Activated CD4-positive, alpha-beta memory T cell treated with anti-CD3 and anti-CD28 coated beads for 36 hours (primary cell): ENCODE measurements at regions of chr7 and their contacts with region 1.

Region 1: DNA sequence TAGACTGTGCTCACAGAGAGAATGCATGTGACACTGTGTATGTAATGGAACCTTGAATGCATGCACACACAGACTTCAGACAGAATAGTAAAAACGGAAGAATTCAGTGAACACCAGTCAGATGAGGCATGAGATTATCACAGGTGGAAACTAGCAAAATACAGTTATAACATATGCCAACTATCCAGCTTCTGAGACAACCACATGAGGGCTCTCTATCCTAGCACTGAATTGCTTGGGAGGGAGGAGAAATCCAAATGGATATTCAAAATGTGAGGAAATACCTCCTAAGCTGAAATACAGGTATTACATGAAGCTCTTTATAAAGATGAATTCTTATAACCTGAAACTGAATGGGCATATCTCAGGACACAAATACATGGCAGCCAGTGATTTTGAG is 30.6 kb downstream of the GARS1 start:
- DNase-seq: no peak
- H3K4me3 Mint-ChIP-seq: no peak overlapping the region
- H3K27ac Mint-ChIP-seq: peak overlapping the region; percentile 86
- H3K4me1 Mint-ChIP-seq: peaks cover 27% of the 10 kb centered on the region
- H3K27me3 Mint-ChIP-seq: no peaks in the 10 kb centered on the region

Region 2: DNA sequence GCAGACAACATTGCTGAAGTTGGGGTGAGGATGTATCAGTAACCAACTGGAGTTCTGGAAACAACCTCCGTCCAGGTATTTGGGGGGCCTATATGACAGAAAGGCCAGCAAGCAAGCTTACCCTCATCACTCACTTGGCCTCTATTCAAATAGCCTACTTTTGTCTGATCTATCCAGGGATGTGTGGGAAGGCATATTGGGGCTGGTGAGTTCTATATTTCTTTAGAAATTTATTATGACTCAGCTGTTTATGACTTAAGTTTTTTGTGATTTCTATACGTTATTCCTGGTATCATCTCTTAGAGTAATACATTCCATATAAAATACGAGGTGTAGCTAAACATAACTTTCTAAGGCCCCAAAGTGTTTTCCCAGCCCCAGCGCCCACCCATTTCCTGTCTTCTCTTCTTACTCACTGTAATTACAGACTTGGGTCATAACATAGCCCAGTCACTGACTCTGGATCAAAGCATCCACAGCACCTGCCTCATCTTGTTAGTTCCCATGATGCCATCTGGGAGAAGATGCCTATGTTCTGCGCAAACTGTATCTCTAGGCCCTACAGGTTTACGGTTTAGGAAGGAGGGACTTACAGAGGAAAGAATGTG is 12.5 kb before region 1 on chr7:
- CTCF ChIA-PET with region 1: interaction called, 3 read pairs
- POLR2A ChIA-PET with region 1: interaction called, 4 read pairs
- intact Hi-C with region 1: loop called (anchors 1 kb)
- DNase-seq: peak; percentile 79
- H3K4me3 Mint-ChIP-seq: no peak overlapping the region
- H3K27ac Mint-ChIP-seq: peak overlapping the region; percentile 87
- H3K4me1 Mint-ChIP-seq: peaks cover 54% of the 10 kb centered on the region
- H3K27me3 Mint-ChIP-seq: no peaks in the 10 kb centered on the region

Region 3: DNA sequence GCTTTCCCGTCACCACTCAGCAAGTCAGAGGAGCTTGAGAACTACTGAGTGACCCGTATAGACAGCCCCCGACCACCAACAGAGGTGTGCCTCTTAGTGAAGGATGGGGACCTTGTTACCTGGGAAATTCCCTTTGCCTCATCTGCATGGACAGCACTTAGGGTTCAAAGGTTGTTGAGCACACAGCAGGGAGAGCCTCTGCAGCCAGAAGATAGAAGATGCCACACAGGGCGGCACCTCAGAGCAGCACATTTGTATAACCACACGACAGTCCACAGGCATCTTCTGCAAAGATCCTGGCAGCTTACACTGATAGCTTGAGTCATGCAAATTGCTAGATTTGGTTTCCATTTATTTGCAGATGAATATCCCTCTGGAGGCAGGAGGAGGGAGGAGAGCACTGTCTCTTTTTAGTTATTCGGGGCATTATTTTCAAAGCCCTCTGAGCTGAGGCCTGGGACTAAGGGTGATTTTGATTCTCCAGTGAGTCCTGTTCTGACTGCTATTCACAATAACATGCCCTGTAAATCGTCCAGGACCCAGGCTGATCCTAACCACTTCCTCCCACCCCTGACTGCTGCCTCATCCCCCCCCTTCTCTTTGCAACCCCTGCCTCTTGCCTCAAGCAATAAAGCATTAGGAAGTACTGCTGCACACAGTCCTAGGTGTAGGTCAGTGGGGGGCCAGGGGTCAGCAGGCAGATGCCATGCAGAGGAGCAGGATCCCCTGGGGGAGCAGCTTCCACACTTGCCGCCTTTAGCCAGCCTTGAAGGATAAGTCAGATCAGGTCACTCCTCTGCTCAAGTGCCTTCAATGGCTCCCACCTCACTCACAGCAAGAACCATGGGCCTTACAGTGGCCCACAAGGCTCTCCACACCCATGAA is 102.0 kb after region 1 on chr7:
- CTCF ChIA-PET with region 1: no interaction called
- POLR2A ChIA-PET with region 1: no interaction called
- intact Hi-C with region 1: loop called (anchors 10 kb)
- DNase-seq: peak; percentile 71
- H3K4me3 Mint-ChIP-seq: peak overlapping the region; percentile 65
- H3K27ac Mint-ChIP-seq: peak overlapping the region; percentile 79
- H3K4me1 Mint-ChIP-seq: peaks cover 44% of the 10 kb centered on the region
- H3K27me3 Mint-ChIP-seq: no peaks in the 10 kb centered on the region